Lower leg skin (tissue), 4 donors: ENCODE measurements at regions of chr5 and their contacts with region 1.

Region 1: DNA sequence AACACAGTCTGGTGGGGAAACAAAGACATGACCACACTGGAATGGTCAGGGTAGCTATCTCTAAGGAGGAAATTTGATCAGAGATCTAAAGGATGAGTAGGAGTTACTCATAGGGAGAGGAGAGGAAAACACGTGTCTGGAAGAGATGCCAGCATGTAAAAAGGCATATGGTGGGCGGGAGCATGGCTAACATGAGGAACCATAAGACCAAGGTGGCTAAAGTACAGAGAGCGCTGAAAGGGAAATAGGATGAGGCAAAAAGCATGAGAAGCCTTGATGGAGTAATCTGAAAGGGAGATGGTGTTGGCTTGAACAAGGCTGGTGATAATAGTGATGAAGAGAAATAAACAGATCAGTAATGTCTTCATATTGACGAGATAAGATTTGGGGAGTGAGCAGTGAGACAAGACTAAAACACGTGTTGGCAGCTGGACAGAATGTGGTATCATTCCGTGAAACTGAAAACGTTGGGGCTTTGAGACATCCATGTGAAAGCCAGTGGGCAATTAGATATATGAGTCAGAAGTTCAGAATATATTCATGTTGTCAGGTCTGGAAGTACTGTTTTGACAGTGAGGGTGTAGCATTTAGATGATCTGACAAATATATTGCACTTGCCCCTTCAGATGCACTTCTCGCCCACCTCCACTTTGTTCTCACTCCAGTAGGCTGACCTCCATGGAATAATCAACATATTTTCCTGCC is 209.1 kb upstream of the KCNN2 start:
- DNase-seq: no peak
- H3K4me3 ChIP-seq: no peak overlapping the region
- CTCF ChIP-seq: no peak
- POLR2A ChIP-seq: no peak

Region 2: DNA sequence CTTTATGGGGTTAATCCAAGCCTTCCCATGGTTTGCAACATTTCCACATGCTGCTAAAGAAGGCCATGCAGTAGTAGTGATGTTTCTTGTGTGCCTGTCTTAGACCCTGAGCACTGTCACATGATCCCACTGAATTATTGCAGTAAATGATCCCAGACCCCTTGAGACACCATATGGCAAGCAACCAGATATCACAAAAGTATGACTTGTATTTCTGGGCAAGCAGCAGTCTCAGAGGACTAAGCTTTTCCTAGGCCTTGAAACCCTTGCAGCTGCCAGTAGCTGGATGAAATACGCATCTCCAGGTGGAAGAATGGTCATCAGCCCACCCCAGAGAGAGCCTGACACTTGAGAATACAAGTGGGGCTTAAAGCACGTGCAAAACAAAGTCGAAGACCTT is 1621.9 kb after region 1 on chr5:
- intact Hi-C with region 1: loop called (anchors 5 kb)
- DNase-seq: peak in 1 of 2 donors; percentile 16
- H3K4me3 ChIP-seq: no peak overlapping the region
- CTCF ChIP-seq: no peak
- POLR2A ChIP-seq: no peak